Psoas muscle (tissue), 8 donors: ENCODE measurements at regions of chr7 and their contacts with region 1.

Region 1: DNA sequence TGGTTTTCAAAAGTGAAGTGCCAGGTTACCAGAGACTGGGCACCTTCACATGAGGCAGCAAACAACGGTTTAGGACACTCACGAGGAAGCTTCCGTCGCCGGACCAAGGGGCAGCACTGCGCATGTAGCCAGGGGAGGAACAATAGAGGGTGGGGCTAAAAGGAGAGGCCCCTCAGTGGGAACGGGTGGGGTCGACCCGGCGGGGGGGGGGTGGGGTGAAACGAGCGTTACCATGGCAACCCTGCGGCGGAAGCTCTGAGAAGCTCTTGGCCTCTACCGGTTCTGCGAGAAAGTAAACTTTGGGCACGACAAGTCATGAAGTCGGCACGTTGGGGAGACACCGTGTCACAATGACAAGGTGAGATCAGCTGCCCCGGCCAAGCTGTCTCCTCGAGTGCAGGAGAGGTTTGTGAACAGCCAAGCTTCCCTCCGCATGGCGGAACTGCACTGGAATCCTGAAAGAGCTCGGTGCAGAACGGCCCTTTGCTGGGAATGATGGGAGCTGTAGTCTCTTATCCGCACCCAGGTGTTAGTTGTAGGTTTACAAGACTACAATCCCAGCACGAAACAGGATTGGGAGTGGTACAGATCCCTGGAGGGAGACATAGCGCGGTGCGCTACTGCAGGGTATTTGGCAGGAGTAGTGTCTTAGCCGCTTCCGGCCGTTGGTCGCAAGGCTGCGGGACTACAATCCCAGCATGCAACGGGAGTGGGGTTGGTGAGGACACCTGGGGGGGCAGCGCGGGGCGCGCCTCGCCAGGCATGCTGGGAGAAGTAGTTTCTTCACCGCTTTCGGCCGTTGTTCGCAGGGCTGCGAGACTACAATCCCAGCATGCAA is 72.8 kb upstream of the ZNF722 start:
- DNase-seq: peak; percentile 93 to 95
- ATAC-seq: peak; percentile 98 to 99 (median 98)
- H3K4me3 ChIP-seq: peak overlapping the region; percentile 80
- H3K27ac ChIP-seq: peak overlapping the region; percentile 85
- H3K4me1 ChIP-seq: no peaks in the 10 kb centered on the region
- H3K27me3 ChIP-seq: no peaks in the 10 kb centered on the region
- CTCF ChIP-seq: no peak

Region 2: DNA sequence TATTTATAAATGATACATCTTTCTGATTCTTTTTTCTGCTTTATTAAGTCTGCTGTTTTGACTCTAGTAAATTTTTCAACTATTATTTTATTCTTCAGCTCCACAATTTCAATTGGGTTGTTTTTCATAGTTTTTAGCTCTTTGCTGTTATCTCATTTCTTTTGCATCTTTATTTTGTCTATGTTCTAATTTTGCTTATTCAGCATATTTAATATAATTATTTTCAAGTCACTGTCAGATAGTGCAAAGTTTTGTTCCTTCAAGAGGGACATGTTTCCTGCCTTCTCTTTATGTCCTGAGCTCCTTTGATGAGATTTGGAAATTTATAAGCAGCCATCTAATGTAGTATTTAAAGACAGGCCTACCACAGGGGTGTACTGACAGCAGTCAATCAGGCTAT is 58.7 kb before region 1 on chr7:
- intact Hi-C with region 1: no loop called
- DNase-seq: no peak
- ATAC-seq: no peak
- H3K4me3 ChIP-seq: no peak overlapping the region
- H3K27ac ChIP-seq: no peak overlapping the region
- H3K4me1 ChIP-seq: no peaks in the 10 kb centered on the region
- H3K27me3 ChIP-seq: no peaks in the 10 kb centered on the region
- CTCF ChIP-seq: no peak

Region 3: DNA sequence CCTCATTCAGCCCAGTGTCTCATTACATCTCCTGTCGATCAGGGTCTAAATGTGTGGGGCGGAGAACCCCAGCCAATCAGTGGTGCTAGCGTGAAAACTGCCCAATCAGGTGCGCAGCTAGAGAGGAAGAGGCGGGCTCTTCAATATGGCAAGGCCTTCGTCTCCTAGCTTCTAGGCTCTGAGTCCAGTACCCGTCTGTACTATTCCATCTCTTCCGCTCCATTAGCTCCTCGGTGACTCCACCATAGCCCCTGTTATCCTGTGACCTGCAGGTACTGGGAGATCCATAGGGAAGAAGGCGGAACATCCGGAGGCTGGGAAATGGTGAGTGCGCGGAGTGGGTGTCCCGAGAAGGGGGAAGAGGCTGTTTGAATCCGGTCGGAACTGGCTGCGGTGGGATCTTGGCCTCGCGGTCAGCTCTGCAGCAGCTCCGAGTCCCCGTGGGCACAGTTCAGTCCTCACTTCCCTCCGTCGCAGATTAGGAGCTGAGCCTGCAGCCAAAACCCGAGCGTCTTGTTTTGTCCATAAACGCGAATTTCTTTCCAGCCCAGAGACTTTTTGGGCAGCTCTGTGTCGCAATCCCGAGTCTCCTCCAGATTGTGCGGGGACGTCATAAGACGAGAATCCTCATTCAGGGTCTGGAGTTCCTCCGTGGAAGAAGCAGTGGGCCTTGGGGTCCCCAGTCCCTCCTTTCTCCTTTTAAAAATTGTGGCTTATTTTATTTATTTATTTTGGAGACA is 119.6 kb after region 1 on chr7 and contains the start of gene ZNF727:
- intact Hi-C with region 1: no loop called
- DNase-seq: peak; percentile 75 to 83
- ATAC-seq: peak; percentile 95 to 99 (median 99)
- H3K4me3 ChIP-seq: peak within 1 kb of the TSS; percentile 73
- H3K27ac ChIP-seq: peak within 1 kb of the TSS; percentile 78
- H3K4me1 ChIP-seq: no peaks in the 10 kb centered on the region
- H3K27me3 ChIP-seq: no peaks in the 10 kb centered on the region
- CTCF ChIP-seq: no peak
- total RNA-seq, gene ZNF727: 1.0 to 3.1 (median 1.6) TPM

Region 4: DNA sequence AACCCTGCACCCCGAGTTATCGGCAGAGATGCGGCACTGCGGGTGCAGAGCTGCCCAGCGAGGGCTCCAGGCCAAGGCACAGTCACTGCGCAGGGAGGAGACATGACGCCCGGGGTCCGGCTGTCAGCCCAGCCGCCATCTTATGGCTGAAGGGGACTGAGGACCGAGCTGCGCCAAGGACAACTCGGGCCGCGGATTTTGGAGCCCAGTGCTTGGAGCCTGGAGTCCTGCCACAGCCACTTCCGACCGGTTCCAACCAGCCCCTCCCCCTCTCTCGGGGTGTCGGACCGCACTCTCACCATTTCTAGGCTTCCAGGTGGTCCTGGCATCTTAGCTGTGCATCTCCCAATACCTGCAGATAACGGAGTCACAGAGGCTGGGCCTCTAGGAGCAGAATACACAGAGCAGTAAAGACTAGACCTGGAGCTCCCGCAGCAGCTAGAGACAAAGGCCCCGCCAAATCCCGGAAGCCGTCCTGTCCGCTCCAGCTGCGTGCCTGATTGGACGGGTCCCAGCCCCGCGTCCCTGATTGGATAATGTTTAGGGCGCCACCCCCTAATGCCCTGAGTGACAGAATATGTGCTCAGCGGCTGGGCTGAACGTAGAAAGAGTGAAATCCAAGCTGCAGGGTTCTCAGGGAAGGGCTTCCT is 636.9 kb after region 1 on chr7 and contains the start of gene ZNF680:
- intact Hi-C with region 1: loop called in 1 of 2 experiments (anchors 10 kb)
- DNase-seq: peak; percentile 96 to 97
- ATAC-seq: peak; percentile 95 to 97 (median 97)
- H3K4me3 ChIP-seq: peak within 1 kb of the TSS; percentile 96
- H3K27ac ChIP-seq: peak within 1 kb of the TSS; percentile 94
- H3K4me1 ChIP-seq: peaks cover 10% of the 10 kb centered on the region
- H3K27me3 ChIP-seq: no peaks in the 10 kb centered on the region
- CTCF ChIP-seq: no peak
- total RNA-seq, gene ZNF680: 16.3 to 18.3 (median 17.1) TPM